K562 (cell line): ENCODE measurements at regions of chr3 and their contacts with region 1.

Region 1: DNA sequence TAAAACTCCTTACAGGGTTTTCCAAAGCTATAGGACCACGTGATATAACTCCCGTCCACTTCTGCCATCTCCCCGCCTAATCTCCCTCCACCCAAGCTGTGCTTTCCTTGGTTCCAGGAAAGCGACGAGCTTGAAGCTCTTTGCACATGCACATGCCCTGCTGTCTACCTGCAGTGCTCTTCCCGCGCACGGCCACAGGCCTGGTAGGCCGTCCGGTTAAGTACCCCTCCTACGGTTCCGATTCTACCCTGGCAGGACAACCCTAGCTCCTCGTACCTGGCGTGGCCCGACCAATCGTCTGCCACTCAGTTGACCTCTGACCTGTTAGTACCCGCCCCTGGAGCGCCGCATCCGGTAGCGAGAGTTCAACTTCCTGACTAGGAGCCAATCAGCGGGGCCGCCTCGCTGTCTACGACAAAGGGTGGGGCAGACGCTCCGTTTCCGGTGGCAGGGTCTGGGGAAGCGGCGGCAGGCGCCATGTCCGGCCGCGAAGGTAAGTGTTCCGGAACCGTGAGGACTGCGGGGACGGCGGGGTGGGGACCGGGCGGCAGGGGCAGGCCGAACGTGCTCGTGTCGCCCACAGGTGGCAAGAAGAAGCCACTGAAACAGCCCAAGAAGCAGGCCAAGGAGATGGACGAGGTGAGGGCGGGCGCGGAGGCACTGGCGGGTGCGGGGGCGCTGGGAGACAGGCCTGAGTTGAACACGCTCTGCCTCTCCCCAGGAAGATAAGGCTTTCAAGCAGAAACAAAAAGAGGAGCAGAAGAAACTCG is at the starts of genes CCDC51 and TMA7:
- DNase-seq: peak; percentile 91 to 97 (median 94)
- ATAC-seq: peak; percentile 97
- H3K4me3 ChIP-seq: peak within 1 kb of the TSS; percentile 89
- H3K27ac ChIP-seq: peak within 1 kb of the TSS; percentile 79
- H3K4me1 ChIP-seq: peaks cover 10% of the 10 kb centered on the region in 2 experiments; a peak in 4 of 5 replicates
- H3K27me3 ChIP-seq: no peaks in the 10 kb centered on the region; a peak in 1 of 5 replicates
- CTCF ChIP-seq: no peak
- EP300 ChIP-seq: no peak
- POLR2A ChIP-seq: peak; percentile 91
- RAD21 ChIP-seq: no peak
- polyA plus RNA-seq, gene CCDC51: 6.5 to 6.8 TPM
- polyA plus RNA-seq, gene TMA7: 835 to 942 TPM

Region 2: GRCh38 chr3:48194446-48195071 is 245.4 kb before region 1 on chr3:
- CTCF ChIA-PET with region 1: interaction called, 25 read pairs
- POLR2A ChIA-PET with region 1: interaction called, 4 read pairs
- in situ Hi-C with region 1: loop called (anchors 10 kb)
- intact Hi-C with region 1: loop called (anchors 2 kb)
- DNase-seq: peak; percentile 53 to 54 (median 54)
- ATAC-seq: peak; percentile 81
- H3K4me3 ChIP-seq: no peak overlapping the region
- H3K27ac ChIP-seq: no peak overlapping the region
- H3K4me1 ChIP-seq: no peaks in the 10 kb centered on the region; a peak in 2 of 5 replicates
- H3K27me3 ChIP-seq: no peaks in the 10 kb centered on the region
- CTCF ChIP-seq: peak; percentile 65 to 79 (median 78)
- EP300 ChIP-seq: no peak
- POLR2A ChIP-seq: no peak
- RAD21 ChIP-seq: peak; percentile 56 to 71

Region 3: GRCh38 chr3:48232734-48233133 is 207.3 kb before region 1 on chr3:
- CTCF ChIA-PET with region 1: interaction called, 3 read pairs
- POLR2A ChIA-PET with region 1: interaction called, 3 read pairs
- in situ Hi-C with region 1: loop called (anchors 10 kb)
- intact Hi-C with region 1: loop called (anchors 2 kb)
- DNase-seq: peak; percentile 58 to 80 (median 62)
- ATAC-seq: peak; percentile 99
- H3K4me3 ChIP-seq: no peak overlapping the region
- H3K27ac ChIP-seq: no peak overlapping the region
- H3K4me1 ChIP-seq: peaks cover 7 to 14% of the 10 kb centered on the region in 2 experiments; a peak in 3 of 5 replicates
- H3K27me3 ChIP-seq: no peaks in the 10 kb centered on the region
- CTCF ChIP-seq: peak; percentile 70 to 73 (median 71)
- EP300 ChIP-seq: no peak
- POLR2A ChIP-seq: no peak
- RAD21 ChIP-seq: peak; percentile 41 to 68

Region 4: GRCh38 chr3:48400824-48401433 is 39.1 kb before region 1 on chr3:
- CTCF ChIA-PET with region 1: interaction called, 28 read pairs
- POLR2A ChIA-PET with region 1: interaction called, 7 read pairs
- in situ Hi-C with region 1: loop called (anchors 5 kb)
- intact Hi-C with region 1: loop called (anchors 1 kb)
- DNase-seq: peak; percentile 74 to 79 (median 76)
- ATAC-seq: peak; percentile 86
- H3K4me3 ChIP-seq: no peak overlapping the region
- H3K27ac ChIP-seq: no peak overlapping the region
- H3K4me1 ChIP-seq: peaks cover 0 to 7% of the 10 kb centered on the region in 2 experiments; a peak in 1 of 5 replicates
- H3K27me3 ChIP-seq: no peaks in the 10 kb centered on the region
- CTCF ChIP-seq: peak; percentile 75 to 82 (median 78)
- EP300 ChIP-seq: no peak
- POLR2A ChIP-seq: no peak
- RAD21 ChIP-seq: peak; percentile 69 to 83